HCT116 (cell line): ENCODE measurements at regions of chr1 and their contacts with region 1.

Region 1: GRCh38 chr1:148388260-148389027 is 94.7 kb downstream of the PPIAL4G start:
- DNase-seq: peak; percentile 79
- ATAC-seq: peak; percentile 89
- H3K4me3 ChIP-seq: peak overlapping the region; percentile 29 to 54
- H3K27ac ChIP-seq: peak overlapping the region; percentile 73
- H3K4me1 ChIP-seq: peaks cover 0 to 18% of the 10 kb centered on the region in 2 experiments; a peak in 2 of 4 replicates
- H3K27me3 ChIP-seq: no peaks in the 10 kb centered on the region
- CTCF ChIP-seq: no peak
- POLR2A ChIP-seq: peak; percentile 99
- RAD21 ChIP-seq: no peak

Region 2: DNA sequence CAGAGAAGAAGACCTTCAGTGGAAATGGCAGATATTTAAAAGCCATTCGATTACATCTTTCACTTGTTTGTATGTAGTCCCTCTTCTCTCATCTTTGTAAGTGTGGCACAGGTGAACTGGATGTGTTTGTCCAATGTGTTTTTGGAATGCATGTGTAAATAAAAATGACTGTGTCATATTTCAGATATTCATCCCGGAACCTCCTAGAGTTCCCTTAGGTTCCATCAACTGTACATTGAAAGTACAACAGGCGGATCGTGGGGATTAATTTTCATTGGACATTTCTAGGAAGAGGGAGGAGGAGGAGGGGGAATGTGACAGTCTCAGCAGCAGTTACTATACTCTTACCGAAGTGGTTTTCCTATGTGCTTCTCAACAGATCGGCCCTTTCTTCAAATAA is 101.1 kb before region 1 on chr1:
- CTCF ChIA-PET with region 1: no interaction called
- POLR2A ChIA-PET with region 1: no interaction called
- RAD21 ChIA-PET with region 1: no interaction called
- intact Hi-C with region 1: no loop called
- DNase-seq: no peak
- ATAC-seq: no peak
- H3K4me3 ChIP-seq: no peak overlapping the region
- H3K27ac ChIP-seq: no peak overlapping the region
- H3K4me1 ChIP-seq: no peaks in the 10 kb centered on the region
- H3K27me3 ChIP-seq: no peaks in the 10 kb centered on the region
- CTCF ChIP-seq: no peak
- POLR2A ChIP-seq: no peak
- RAD21 ChIP-seq: no peak

Region 3: DNA sequence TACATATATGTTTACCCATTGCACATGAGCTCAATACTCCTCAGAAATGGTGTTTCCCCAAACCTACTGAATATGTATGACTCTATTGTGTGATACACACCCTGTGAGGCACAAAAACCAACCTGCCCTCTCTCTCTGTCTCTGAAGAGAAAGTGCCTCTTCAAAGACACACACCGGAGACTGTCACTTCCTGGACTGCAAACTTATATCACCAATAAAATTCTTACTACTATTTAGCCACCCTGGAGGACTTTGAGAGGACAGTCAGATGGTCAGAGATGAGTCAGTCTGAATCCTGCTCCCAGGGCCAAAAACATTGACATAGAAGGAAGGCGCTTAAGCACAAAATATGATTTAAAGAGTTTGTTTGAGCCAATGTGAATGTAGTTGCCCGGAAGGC is 15.7 kb before region 1 on chr1:
- CTCF ChIA-PET with region 1: no interaction called
- POLR2A ChIA-PET with region 1: interaction called, 10 read pairs
- RAD21 ChIA-PET with region 1: no interaction called
- intact Hi-C with region 1: no loop called
- DNase-seq: no peak
- ATAC-seq: no peak
- H3K4me3 ChIP-seq: no peak overlapping the region
- H3K27ac ChIP-seq: no peak overlapping the region
- H3K4me1 ChIP-seq: peaks cover 0 to 19% of the 10 kb centered on the region in 2 experiments; a peak in 3 of 4 replicates
- H3K27me3 ChIP-seq: no peaks in the 10 kb centered on the region
- CTCF ChIP-seq: no peak
- POLR2A ChIP-seq: no peak
- RAD21 ChIP-seq: no peak